Heart left ventricle (tissue), 16 donors: ENCODE measurements at regions of chr17 and their contacts with region 1.

Region 1: GRCh38 chr17:81911277-81911961 is at the start of gene PCYT2:
- DNase-seq: peak; percentile 92 to 96 (median 93)
- ATAC-seq: peak; percentile 91 to 95 (median 94)
- H3K4me3 ChIP-seq: peak within 1 kb of the TSS; percentile 63 to 98 (median 80)
- H3K27ac ChIP-seq: peak within 1 kb of the TSS in 10 of 12 donors; percentile 17 to 83 (median 50)
- H3K4me1 ChIP-seq: peaks cover 5 to 32% (median 18%) of the 10 kb centered on the region in 12 donors
- H3K27me3 ChIP-seq: no peaks in the 10 kb centered on the region
- CTCF ChIP-seq: peak in 1 of 12 donors; percentile 23
- POLR2A ChIP-seq: no peak
- total RNA-seq, gene PCYT2: 28.8 to 85.5 (median 46.2) TPM

Region 2: GRCh38 chr17:81890447-81891299 is 20.7 kb before region 1 on chr17:
- intact Hi-C with region 1: loop called in 1 of 10 experiments (anchors 1 kb)
- DNase-seq: peak in 1 of 5 donors; percentile 60
- ATAC-seq: no peak
- H3K4me3 ChIP-seq: peak overlapping the region; percentile 56 to 99 (median 94)
- H3K27ac ChIP-seq: peak overlapping the region in 11 of 12 donors; percentile 64 to 97 (median 93)
- H3K4me1 ChIP-seq: peaks cover 7 to 34% (median 21%) of the 10 kb centered on the region in 12 donors
- H3K27me3 ChIP-seq: no peaks in the 10 kb centered on the region
- CTCF ChIP-seq: no peak
- POLR2A ChIP-seq: no peak

Region 3: DNA sequence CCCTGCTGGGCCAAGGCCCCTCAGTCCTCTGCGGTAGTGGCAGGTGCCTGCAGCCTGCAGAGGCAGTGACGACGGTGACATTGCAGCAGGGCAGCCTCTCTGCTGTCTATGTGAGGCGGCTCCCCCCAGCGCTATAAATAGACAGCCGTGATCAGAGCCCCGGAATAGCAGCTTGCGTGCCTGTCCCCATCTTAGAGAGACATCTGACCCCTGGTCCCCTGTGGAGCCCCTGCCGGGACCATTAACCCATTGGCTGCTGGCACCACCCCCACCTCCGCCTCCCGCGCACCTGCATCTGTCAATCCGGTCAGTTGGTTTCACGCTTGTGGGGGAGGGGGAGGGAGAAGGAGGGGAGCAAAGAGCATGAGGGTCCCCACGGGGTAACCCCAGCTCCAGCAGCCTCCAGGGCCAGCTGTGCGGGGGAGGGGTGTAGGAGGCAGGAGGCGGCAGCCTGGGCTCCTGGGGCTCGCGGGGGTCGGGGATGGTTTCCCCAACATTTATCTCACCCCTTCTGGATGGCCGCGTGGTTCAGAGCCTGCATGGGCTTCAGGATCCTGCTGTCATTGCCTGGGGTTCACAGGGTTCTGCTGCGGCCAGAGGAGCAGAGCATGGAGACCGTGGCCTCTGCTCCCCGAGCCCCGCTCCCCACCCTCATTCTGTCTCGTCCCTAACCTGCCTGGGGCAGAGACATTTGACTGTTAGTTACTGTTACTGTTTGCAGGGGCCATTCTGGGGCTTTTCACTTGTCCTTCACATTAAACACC is 30.6 kb after region 1 on chr17:
- intact Hi-C with region 1: no loop called
- DNase-seq: peak in 4 of 5 donors; percentile 72 to 85 (median 76)
- ATAC-seq: peak; percentile 74 to 89 (median 80)
- H3K4me3 ChIP-seq: peak overlapping the region in 11 of 12 donors; percentile 27 to 60 (median 47)
- H3K27ac ChIP-seq: peak overlapping the region in 11 of 12 donors; percentile 12 to 92 (median 77)
- H3K4me1 ChIP-seq: peaks cover 0 to 44% (median 22%) of the 10 kb centered on the region in 12 donors
- H3K27me3 ChIP-seq: peaks cover 0 to 11% (median 0%) of the 10 kb centered on the region in 9 donors
- CTCF ChIP-seq: no peak
- POLR2A ChIP-seq: no peak